Calu3 (cell line): ENCODE measurements at regions of chr12 and their contacts with region 1.

Region 1: GRCh38 chr12:110813285-110813684 is 33.5 kb upstream of the CCDC63 start:
- DNase-seq: no peak
- H3K4me3 Mint-ChIP-seq: no peak overlapping the region
- H3K27ac Mint-ChIP-seq: no peak overlapping the region
- H3K4me1 Mint-ChIP-seq: no peaks in the 10 kb centered on the region
- H3K27me3 Mint-ChIP-seq: peaks cover 41% of the 10 kb centered on the region
- CTCF ChIP-seq: no peak

Region 2: DNA sequence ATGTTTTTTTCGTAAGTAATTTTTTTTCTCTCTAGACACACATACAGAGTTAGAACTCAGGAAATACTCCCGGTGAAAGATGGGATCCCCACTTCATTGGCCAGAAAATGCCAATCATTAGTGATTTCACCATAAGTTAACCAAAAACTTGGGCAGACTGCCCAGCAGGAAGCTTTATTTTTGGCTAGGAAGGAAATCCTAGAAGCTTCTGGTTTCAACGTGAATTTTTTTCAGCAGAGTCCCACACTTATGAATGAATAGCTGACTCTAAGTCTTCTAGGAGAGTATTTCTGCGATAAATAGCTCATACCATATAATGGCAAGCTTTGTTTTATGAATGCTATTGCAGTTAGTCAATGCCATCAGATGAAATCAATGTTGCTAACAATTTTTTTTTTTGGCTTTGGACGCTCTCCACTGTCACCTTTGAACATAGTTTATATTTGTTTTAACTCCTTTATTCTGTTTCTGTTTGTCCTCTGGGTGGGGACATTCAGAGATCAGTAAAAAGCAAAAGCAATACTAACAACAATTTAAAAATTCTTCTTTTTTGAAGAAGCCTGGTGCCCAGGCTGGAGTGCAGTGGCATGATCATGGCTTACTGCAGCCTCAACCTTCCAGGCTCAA is 80.1 kb before region 1 on chr12:
- CTCF ChIA-PET with region 1: no interaction called
- intact Hi-C with region 1: loop called (anchors 5 kb)
- DNase-seq: peak; percentile 30
- H3K4me3 Mint-ChIP-seq: peak overlapping the region; percentile 13
- H3K27ac Mint-ChIP-seq: no peak overlapping the region
- H3K4me1 Mint-ChIP-seq: peaks cover 36% of the 10 kb centered on the region
- H3K27me3 Mint-ChIP-seq: no peaks in the 10 kb centered on the region
- CTCF ChIP-seq: no peak